ENCODE measurements at regions of chr11 and their contacts with region 1.

Region 1: GRCh38 chr11:14358729-14359439 is at the start of gene RRAS2:
- DNase-seq: peak in 1 of 2 donors; percentile 87
- H3K4me3 ChIP-seq: peak within 1 kb of the TSS; percentile 79 to 100
- H3K27ac ChIP-seq: peak within 1 kb of the TSS; percentile 79 to 80
- H3K4me1 ChIP-seq: peaks cover 0 to 3% of the 10 kb centered on the region in 2 donors
- H3K27me3 ChIP-seq: no peaks in the 10 kb centered on the region
- CTCF ChIP-seq: peak in 1 of 3 experiments; percentile 9
- total RNA-seq, gene RRAS2: 28.1 TPM

Region 2: DNA sequence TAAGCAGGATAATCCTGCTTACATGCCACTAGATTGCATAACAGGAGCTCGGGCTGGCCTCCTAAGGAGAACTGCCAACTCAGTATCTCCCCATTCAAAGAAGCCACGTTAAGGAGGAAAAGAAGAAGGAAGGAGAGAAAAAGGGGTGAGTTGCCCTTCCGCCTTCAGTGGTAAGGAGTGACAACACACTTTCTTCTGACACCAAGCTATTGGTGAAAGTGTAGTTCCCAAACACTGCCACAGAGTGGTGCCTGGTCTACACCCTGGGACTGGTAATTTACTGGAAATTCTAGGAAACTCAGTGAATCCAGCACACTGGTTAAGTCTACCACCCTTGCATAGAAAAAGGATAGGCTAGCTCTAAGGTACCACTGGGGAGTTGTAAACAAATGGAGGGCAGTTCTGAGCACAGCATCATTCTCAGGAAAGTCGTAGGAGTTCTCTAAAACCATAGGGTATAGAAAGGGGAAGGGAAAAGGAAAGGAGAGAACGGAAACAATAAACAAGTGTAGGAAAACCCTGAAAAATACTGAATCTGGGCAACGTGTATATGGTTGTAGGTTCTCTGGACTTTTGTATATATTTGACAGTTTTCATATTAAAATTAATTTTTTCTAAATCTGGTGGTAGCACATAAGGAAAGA is 58.1 kb before region 1 on chr11:
- intact Hi-C with region 1: loop called (anchors 2 kb)
- DNase-seq: peak; percentile 20 to 78
- H3K4me3 ChIP-seq: no peak overlapping the region
- H3K27ac ChIP-seq: no peak overlapping the region
- H3K4me1 ChIP-seq: peaks cover 3 to 20% of the 10 kb centered on the region in 2 donors
- H3K27me3 ChIP-seq: no peaks in the 10 kb centered on the region
- CTCF ChIP-seq: peak; percentile 75 to 83 (median 77)

Region 3: GRCh38 chr11:14327116-14327515 is 31.8 kb before region 1 on chr11:
- intact Hi-C with region 1: no loop called
- DNase-seq: no peak
- H3K4me3 ChIP-seq: no peak overlapping the region
- H3K27ac ChIP-seq: no peak overlapping the region
- H3K4me1 ChIP-seq: peaks cover 0 to 20% of the 10 kb centered on the region in 2 donors
- H3K27me3 ChIP-seq: no peaks in the 10 kb centered on the region
- CTCF ChIP-seq: no peak

Region 4: GRCh38 chr11:14380947-14381561 is 22.2 kb after region 1 on chr11:
- intact Hi-C with region 1: loop called (anchors 1 kb)
- DNase-seq: peak; percentile 45 to 91
- H3K4me3 ChIP-seq: peak overlapping the region; percentile 60 to 81
- H3K27ac ChIP-seq: peak overlapping the region; percentile 79 to 94
- H3K4me1 ChIP-seq: peaks cover 6 to 22% of the 10 kb centered on the region in 2 donors
- H3K27me3 ChIP-seq: no peaks in the 10 kb centered on the region
- CTCF ChIP-seq: no peak

Region 5: GRCh38 chr11:14399087-14399486 is 40.2 kb after region 1 on chr11:
- intact Hi-C with region 1: no loop called
- DNase-seq: no peak
- H3K4me3 ChIP-seq: no peak overlapping the region
- H3K27ac ChIP-seq: no peak overlapping the region
- H3K4me1 ChIP-seq: no peaks in the 10 kb centered on the region
- H3K27me3 ChIP-seq: no peaks in the 10 kb centered on the region
- CTCF ChIP-seq: no peak

Region 6: GRCh38 chr11:14422052-14422813 is 63.3 kb after region 1 on chr11:
- intact Hi-C with region 1: loop called (anchors 1 kb)
- DNase-seq: peak; percentile 71 to 95
- H3K4me3 ChIP-seq: no peak overlapping the region
- H3K27ac ChIP-seq: peak overlapping the region; percentile 57 to 60
- H3K4me1 ChIP-seq: peaks cover 6 to 26% of the 10 kb centered on the region in 2 donors
- H3K27me3 ChIP-seq: no peaks in the 10 kb centered on the region
- CTCF ChIP-seq: no peak

Region 7: GRCh38 chr11:14454861-14455632 is 96.2 kb after region 1 on chr11:
- intact Hi-C with region 1: loop called (anchors 2 kb)
- DNase-seq: no peak
- H3K4me3 ChIP-seq: no peak overlapping the region
- H3K27ac ChIP-seq: no peak overlapping the region
- H3K4me1 ChIP-seq: no peaks in the 10 kb centered on the region
- H3K27me3 ChIP-seq: no peaks in the 10 kb centered on the region
- CTCF ChIP-seq: peak in 2 of 3 experiments; percentile 47 to 67

Measured in ascending aorta (tissue), 2 donors.